Colonic mucosa (tissue), 4 donors: ENCODE measurements at regions of chr11 and their contacts with region 1.

Region 1: GRCh38 chr11:123707606-123708205 is 33.8 kb downstream of the ZNF202 start:
- DNase-seq: peak; percentile 57
- H3K4me3 ChIP-seq: no peak overlapping the region
- H3K27ac ChIP-seq: no peak overlapping the region
- H3K4me1 ChIP-seq: no peaks in the 10 kb centered on the region
- H3K27me3 ChIP-seq: no peaks in the 10 kb centered on the region
- CTCF ChIP-seq: peak; percentile 52

Region 2: GRCh38 chr11:123373754-123374621 is 333.7 kb before region 1 on chr11:
- intact Hi-C with region 1: no loop called
- DNase-seq: no peak
- H3K4me3 ChIP-seq: no peak overlapping the region
- H3K27ac ChIP-seq: no peak overlapping the region
- H3K4me1 ChIP-seq: no peaks in the 10 kb centered on the region
- H3K27me3 ChIP-seq: no peaks in the 10 kb centered on the region
- CTCF ChIP-seq: no peak

Region 3: GRCh38 chr11:123580557-123581275 is 127.0 kb before region 1 on chr11:
- intact Hi-C with region 1: loop called (anchors 2 kb)
- DNase-seq: peak; percentile 75
- H3K4me3 ChIP-seq: no peak overlapping the region
- H3K27ac ChIP-seq: no peak overlapping the region
- H3K4me1 ChIP-seq: no peaks in the 10 kb centered on the region
- H3K27me3 ChIP-seq: no peaks in the 10 kb centered on the region
- CTCF ChIP-seq: peak; percentile 93

Region 4: DNA sequence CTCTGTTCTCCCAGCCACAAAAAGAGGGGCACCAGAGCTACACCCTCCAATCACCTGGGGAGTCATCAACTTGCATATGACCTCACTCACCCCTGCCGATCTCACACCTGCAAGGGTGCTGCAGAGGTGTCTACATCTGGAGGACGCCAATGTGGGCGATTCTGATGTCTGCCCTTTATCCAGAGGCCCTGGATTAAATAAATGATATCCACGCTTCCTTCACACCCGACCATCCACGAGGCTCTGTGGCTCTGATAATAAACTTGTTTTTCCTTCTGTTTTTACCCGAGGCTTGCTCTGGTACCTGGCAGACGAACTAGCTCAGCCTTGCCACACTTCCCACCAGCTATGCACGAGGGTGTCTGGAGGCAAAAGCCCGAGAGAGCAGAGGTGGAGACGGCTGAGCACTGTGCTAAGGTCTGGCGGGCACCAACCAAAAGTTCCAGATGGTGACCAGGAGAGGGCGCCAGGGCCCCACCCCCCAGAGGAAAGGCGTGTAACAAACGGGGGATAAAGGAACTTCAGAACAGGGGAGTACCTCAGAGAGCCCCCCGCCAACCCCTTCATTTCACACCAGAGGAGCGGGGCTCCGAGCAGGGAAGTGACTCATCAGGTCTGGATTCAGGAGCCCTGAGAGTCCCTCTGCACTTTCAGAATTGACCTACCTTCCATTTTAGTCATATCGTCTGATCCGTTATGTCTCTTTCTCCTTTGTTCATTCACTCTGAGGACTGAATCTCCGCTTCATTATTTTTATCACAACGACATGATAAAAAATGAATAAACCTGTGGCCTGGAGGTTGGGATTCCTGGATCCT is 66.8 kb before region 1 on chr11:
- intact Hi-C with region 1: loop called (anchors 5 kb)
- DNase-seq: peak; percentile 37
- H3K4me3 ChIP-seq: no peak overlapping the region
- H3K27ac ChIP-seq: no peak overlapping the region
- H3K4me1 ChIP-seq: no peaks in the 10 kb centered on the region
- H3K27me3 ChIP-seq: no peaks in the 10 kb centered on the region
- CTCF ChIP-seq: peak; percentile 48